Posterior cingulate gyrus (tissue), 11 donors: ENCODE measurements at regions of chr1 and their contacts with region 1.

Region 1: GRCh38 chr1:240027059-240027462 is 64.6 kb upstream of the FMN2 start:
- DNase-seq: peak; percentile 27 to 91 (median 52)

Region 2: DNA sequence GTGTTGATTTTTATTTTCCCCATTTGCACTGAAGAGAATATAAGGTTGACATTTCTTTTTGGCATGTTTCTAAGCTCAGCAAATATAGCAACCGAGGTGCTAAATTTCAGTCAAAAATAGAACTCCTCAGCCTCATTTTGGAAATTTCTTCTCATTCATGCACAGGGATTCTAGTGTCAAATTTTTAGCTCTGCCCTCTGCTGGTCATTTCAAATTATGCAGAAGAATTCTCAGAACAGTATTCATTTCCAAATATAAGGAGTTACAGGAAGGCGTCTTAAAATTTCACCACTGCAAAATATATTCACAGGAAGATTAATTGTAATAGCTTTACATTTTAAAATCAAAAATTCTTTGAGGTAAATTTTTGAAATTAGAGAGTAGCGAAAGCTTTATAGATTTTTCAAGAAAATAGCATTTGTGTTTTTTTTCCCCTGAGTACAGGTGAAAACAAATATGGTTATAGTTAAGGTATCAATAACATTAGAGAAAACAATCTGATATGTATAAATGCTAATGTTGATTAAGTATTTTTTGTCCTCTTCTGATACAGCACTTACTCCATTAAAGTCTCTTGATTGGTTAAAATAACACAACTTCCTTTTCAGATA is 122.5 kb after region 1 on chr1:
- intact Hi-C with region 1: loop called (anchors 1 kb)
- DNase-seq: no peak

Region 3: DNA sequence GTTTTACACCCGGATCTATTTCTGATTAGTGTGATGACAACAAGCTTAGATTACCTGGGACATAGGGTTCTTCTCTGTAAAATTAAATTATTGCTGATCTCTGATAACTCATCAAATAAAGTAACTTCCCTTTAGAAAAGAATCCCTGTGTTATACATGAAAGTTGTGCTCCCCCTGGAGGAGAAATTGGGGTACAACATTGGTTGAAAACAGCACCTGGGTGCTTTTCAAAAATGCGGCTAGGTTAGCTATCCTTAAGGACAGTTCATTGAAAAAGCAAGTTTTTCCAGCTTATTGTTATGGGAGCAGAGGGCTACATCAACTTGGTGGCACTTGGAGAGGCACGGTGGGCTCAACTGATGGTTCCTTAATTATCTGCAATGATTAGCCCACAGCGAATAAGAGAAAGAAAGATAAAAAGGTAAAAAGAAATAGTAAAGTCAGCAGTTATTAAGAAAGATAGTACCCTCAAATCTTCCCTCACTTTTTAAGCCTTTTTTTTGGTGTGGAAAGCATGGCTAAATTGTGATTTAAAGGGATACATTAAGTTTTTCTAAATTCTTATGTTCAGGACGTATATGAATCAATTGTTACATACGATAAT is 162.4 kb after region 1 on chr1:
- intact Hi-C with region 1: loop called (anchors 1 kb)
- DNase-seq: no peak

Region 4: GRCh38 chr1:240320659-240321058 is 293.6 kb after region 1 on chr1:
- intact Hi-C with region 1: no loop called
- DNase-seq: no peak